ENCODE measurements at regions of chr19 and their contacts with region 1.

Region 1: DNA sequence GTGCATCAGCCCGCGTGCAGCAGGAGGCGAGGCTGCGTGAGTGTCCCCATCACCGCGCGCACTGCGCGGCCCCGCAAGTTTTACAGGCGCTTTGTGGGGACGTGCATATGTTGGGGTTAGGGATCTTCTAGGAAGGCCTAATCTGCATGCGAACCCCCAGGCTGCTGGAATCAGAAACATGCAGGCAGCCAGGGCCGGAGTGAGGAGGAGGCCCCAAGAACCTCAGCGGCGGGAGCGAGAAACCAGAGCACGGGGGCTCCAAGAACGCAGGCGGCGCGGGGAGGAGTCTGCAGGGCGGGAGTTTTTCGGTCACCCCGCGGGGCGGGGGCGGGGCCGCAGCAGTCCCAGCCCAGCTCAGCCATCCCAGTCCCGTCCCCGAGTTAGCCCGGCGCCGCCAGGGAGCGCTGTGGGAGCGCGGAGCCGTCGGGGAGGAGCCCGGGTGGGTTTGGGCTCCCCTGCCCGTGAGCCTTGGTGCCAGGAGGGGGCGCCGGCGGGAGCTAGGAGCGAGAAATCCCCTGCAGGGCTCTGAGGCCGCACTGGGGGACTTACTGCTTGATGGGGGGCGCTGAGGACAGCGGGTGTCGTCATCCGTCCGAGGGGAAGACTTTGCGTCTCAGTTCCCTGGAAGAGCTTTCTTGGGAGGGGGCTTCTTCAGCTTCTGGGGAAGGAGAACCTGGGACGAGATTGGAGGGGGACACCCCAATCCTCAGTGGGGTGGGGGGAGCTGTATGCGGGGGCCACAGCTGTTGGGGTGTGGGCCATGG is 933 bp upstream of the NRTN start:
- DNase-seq: peak; percentile 91 to 93 (median 92)
- H3K4me3 ChIP-seq: peak overlapping the region in 1 of 4 donors; percentile 34
- H3K27ac ChIP-seq: peak overlapping the region in 3 of 5 donors; percentile 18 to 27 (median 19)
- H3K4me1 ChIP-seq: peaks cover 33 to 40% of the 10 kb centered on the region in 2 donors
- H3K27me3 ChIP-seq: no peaks in the 10 kb centered on the region
- CTCF ChIP-seq: peak; percentile 85 to 98 (median 90)
- POLR2A ChIP-seq: no peak

Region 2: DNA sequence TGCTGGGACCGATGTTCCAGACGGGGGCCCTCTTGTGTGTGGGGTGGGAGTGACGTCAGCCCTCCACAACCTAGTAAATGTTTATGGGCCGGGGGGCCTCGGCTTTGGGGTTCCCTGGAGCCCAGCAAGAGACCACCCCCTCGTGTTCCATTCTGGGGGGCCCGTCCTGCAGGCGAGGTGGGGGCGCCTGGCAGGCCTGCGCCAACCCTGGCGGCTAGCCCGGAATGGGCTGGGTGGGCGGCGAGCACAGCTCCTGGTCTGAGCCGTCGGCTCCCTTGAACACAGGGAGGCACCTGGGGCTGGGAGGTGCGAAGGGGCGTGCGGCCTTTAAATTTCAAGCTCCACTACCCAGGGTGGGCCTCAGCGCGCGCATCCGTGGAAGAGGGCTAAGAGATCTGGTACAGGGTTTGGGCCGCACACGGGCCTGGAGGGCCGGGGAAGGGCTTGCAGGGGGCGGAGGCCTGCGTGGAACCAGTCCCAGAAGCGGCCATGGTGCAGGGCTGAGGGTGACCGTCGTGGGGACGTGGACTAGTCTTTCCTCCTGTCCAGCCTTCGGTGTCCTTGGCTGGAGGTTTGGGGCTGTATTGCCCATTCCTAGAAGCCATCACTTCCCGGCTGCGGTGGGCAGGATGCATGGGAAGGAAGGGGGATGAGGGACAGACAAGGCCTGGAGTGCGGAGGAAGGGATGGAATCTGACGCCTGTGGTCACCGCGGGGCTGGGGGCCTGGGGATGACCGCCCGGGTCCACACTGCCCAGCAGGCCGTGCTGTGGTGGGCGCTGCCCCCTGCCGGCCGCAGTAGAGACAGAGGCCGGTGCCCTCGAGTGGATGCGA is 88.2 kb after region 1 on chr19:
- intact Hi-C with region 1: loop called (anchors 2 to 5 kb)
- DNase-seq: peak in 6 of 7 donors; percentile 49 to 72 (median 62)
- H3K4me3 ChIP-seq: no peak overlapping the region
- H3K27ac ChIP-seq: no peak overlapping the region
- H3K4me1 ChIP-seq: peaks cover 19 to 46% of the 10 kb centered on the region in 2 donors
- H3K27me3 ChIP-seq: no peaks in the 10 kb centered on the region
- CTCF ChIP-seq: peak; percentile 31 to 73 (median 66)
- POLR2A ChIP-seq: no peak

Measured in adrenal gland (tissue), 19 donors.